ENCODE measurements at regions of chr1 and their contacts with region 1.

Region 1: DNA sequence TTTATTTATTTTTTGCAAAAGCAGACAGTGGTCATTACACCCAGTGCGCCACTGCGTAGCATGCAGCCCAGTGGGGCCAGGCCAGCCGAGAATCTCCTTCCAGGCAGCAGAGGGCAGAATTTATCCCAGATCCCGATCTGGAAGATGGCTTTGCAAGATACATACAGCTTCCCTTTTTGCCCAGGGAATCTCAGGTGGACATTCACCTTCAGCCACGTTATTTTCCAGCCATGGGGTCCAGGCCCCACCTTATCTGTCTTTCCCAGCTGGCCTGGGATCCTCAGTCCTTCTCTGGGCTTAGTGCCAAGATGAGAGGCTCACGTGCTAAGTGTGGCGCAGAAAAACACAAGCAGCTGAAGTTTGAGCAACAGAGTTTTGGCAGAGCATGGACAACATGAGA is 123.6 kb downstream of the AJAP1 start:
- DNase-seq: peak in 8 of 10 donors; percentile 19 to 69 (median 56)
- H3K4me3 ChIP-seq: peak overlapping the region in 2 of 59 donors; percentile 18 to 33
- H3K27ac ChIP-seq: peak overlapping the region in 13 of 59 donors; percentile 3 to 62 (median 22)
- H3K27me3 ChIP-seq: no peaks in the 10 kb centered on the region
- CTCF ChIP-seq: peak in 55 of 56 donors; percentile 34 to 82 (median 66)

Region 2: DNA sequence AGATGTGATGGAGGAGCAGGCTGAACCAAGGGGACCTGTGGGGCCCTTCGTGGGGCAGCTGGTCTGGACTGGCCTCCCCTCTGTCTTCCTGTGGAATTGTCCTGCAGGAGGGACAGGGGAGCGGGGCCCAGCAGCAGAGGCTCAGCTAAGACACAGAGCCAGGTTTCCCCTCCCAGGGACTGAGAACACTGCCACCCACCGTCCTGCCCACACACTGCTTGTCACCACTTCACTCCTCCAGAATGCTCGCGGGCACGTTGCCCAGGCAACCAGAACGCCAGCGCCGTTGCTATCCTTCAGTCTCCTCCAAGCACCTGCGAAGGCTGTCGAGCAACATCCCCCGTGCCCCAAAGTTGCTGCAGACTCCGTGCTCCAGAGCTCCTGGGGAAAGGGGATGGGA is 77.3 kb before region 1 on chr1:
- intact Hi-C with region 1: loop called in 1 of 2 experiments (anchors 5 kb)
- DNase-seq: peak; percentile 49 to 96 (median 90)
- H3K4me3 ChIP-seq: peak overlapping the region in 5 of 59 donors; percentile 16 to 22 (median 18)
- H3K27ac ChIP-seq: peak overlapping the region in 58 of 59 donors; percentile 62 to 96 (median 86)
- H3K27me3 ChIP-seq: no peaks in the 10 kb centered on the region
- CTCF ChIP-seq: peak in 54 of 56 donors; percentile 14 to 73 (median 50)

Region 3: GRCh38 chr1:4825800-4826450 is 47.9 kb after region 1 on chr1:
- intact Hi-C with region 1: loop called (anchors 2 to 10 kb)
- DNase-seq: peak in 3 of 10 donors; percentile 14 to 54 (median 49)
- H3K4me3 ChIP-seq: no peak overlapping the region
- H3K27ac ChIP-seq: no peak overlapping the region
- H3K27me3 ChIP-seq: no peaks in the 10 kb centered on the region
- CTCF ChIP-seq: peak in 54 of 56 donors; percentile 44 to 78 (median 61)